ENCODE measurements at regions of chr2 and their contacts with region 1.

Region 1: GRCh38 chr2:9423100-9423921 is at the starts of genes CPSF3 and ITGB1BP1:
- DNase-seq: peak; percentile 99
- ATAC-seq: peak; percentile 89
- H3K4me3 Mint-ChIP-seq: no peak within 1 kb of the TSS
- H3K27ac Mint-ChIP-seq: peak within 1 kb of the TSS; percentile 94
- H3K4me1 Mint-ChIP-seq: peaks cover 36% of the 10 kb centered on the region
- H3K27me3 Mint-ChIP-seq: no peaks in the 10 kb centered on the region
- total RNA-seq, gene CPSF3: 72.3 to 103 TPM
- total RNA-seq, gene ITGB1BP1: 89.7 to 92.1 TPM

Region 2: GRCh38 chr2:8836971-8837794 is 586.1 kb before region 1 on chr2 and contains the start of gene KIDINS220:
- CTCF ChIA-PET with region 1: no interaction called
- POLR2A ChIA-PET with region 1: no interaction called
- intact Hi-C with region 1: loop called in 1 of 2 experiments (anchors 1 kb)
- DNase-seq: peak; percentile 92
- ATAC-seq: peak; percentile 95
- H3K4me3 Mint-ChIP-seq: peak within 1 kb of the TSS; percentile 99
- H3K27ac Mint-ChIP-seq: peak within 1 kb of the TSS; percentile 98
- H3K4me1 Mint-ChIP-seq: peaks cover 39% of the 10 kb centered on the region
- H3K27me3 Mint-ChIP-seq: no peaks in the 10 kb centered on the region
- total RNA-seq, gene KIDINS220: 22.7 to 24.4 TPM

Region 3: DNA sequence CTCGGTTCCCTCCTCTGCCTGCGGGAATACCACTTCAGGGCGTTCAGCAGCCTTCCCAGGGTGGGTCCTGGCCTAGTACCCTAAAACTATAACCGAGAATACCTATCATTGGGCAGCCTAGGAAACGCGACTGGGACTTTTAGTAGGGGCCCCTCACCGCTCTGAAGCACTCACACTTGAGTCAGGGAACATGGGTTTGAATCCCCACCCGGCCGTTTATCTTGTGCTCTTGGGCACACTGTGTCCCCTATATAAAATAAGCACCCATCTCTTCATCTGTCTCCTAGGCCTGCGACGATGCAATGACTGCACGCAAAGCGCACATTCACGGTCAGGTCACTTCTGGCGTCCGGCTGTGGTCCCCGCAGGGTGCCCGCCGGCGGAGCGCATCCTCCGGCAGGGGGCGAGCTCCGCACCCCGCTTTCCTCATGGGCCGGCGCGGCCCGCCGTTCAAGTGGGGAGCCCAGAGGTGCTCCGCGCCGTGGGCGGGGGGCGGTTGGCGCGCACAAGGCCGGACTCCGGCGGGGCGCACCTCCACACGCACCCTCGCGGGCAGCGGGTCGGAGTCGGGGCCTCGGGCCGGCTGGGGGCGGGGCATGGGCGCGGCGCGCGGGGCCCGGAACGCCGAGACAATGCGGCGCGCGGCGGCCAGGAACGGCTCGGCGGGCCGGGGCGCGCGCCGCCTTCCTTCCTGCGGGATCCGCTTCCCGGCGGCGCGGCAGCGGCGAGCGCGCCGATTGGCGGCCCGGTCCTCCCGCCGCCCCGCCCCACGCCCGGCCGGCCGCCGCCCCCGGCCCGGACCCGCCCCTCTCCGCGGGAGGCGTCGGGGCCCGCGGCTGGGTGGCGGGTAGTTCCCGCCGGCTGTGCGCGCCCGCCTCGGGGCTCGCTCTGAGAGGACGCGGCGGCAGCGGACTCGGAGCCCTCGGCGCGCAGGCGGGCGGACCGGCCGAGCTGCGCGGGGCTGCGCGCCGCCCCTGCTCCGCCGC is 217.1 kb before region 1 on chr2 and contains the start of gene ASAP2:
- CTCF ChIA-PET with region 1: no interaction called
- POLR2A ChIA-PET with region 1: no interaction called
- intact Hi-C with region 1: loop called in 1 of 2 experiments (anchors 2 kb)
- DNase-seq: peak; percentile 70
- ATAC-seq: peak; percentile 74
- H3K4me3 Mint-ChIP-seq: peak within 1 kb of the TSS; percentile 62
- H3K27ac Mint-ChIP-seq: no peak within 1 kb of the TSS
- H3K4me1 Mint-ChIP-seq: peaks cover 11% of the 10 kb centered on the region
- H3K27me3 Mint-ChIP-seq: peaks cover 43% of the 10 kb centered on the region
- total RNA-seq, gene ASAP2: 0.21 to 0.26 TPM

Region 4: GRCh38 chr2:9484533-9484932 is 61.2 kb after region 1 on chr2:
- CTCF ChIA-PET with region 1: no interaction called
- POLR2A ChIA-PET with region 1: no interaction called
- intact Hi-C with region 1: no loop called
- DNase-seq: no peak
- ATAC-seq: no peak
- H3K4me3 Mint-ChIP-seq: no peak overlapping the region
- H3K27ac Mint-ChIP-seq: no peak overlapping the region
- H3K4me1 Mint-ChIP-seq: peaks cover 18% of the 10 kb centered on the region
- H3K27me3 Mint-ChIP-seq: no peaks in the 10 kb centered on the region

Region 5: DNA sequence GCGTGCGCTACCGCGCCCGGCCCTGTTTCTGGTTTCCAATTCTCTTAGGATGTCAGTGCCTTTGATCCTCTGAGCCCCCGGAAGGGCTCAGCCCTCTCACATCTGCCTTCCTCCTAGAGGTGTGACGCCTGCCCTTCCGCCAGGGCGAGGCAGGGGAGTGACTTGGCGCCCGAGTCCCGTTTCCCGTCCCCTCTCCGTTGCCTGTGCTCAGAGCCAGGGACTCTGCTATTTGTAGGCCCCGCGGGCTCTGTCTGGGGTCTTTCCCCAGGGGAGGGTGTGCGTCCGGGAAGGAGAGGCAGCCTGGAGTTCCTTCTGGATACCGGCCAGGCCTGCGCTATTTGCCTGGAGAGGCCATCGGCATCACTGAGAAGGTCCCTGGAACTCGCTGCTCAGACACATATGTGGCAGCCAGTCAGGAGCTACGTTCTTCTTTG is 316.2 kb after region 1 on chr2:
- CTCF ChIA-PET with region 1: no interaction called
- POLR2A ChIA-PET with region 1: no interaction called
- intact Hi-C with region 1: loop called in 1 of 2 experiments (anchors 2 kb)
- DNase-seq: peak; percentile 73
- ATAC-seq: peak; percentile 75
- H3K4me3 Mint-ChIP-seq: peak overlapping the region; percentile 65
- H3K27ac Mint-ChIP-seq: peak overlapping the region; percentile 92
- H3K4me1 Mint-ChIP-seq: peaks cover 53% of the 10 kb centered on the region
- H3K27me3 Mint-ChIP-seq: no peaks in the 10 kb centered on the region

Region 6: GRCh38 chr2:9843229-9844035 is 420.1 kb after region 1 on chr2 and contains the start of gene TAF1B:
- CTCF ChIA-PET with region 1: no interaction called
- POLR2A ChIA-PET with region 1: no interaction called
- intact Hi-C with region 1: loop called (anchors 1 kb)
- DNase-seq: peak; percentile 93
- ATAC-seq: peak; percentile 80
- H3K4me3 Mint-ChIP-seq: peak within 1 kb of the TSS; percentile 89
- H3K27ac Mint-ChIP-seq: peak within 1 kb of the TSS; percentile 85
- H3K4me1 Mint-ChIP-seq: peaks cover 37% of the 10 kb centered on the region
- H3K27me3 Mint-ChIP-seq: no peaks in the 10 kb centered on the region
- total RNA-seq, gene TAF1B: 28.7 to 28.8 TPM

Region 7: DNA sequence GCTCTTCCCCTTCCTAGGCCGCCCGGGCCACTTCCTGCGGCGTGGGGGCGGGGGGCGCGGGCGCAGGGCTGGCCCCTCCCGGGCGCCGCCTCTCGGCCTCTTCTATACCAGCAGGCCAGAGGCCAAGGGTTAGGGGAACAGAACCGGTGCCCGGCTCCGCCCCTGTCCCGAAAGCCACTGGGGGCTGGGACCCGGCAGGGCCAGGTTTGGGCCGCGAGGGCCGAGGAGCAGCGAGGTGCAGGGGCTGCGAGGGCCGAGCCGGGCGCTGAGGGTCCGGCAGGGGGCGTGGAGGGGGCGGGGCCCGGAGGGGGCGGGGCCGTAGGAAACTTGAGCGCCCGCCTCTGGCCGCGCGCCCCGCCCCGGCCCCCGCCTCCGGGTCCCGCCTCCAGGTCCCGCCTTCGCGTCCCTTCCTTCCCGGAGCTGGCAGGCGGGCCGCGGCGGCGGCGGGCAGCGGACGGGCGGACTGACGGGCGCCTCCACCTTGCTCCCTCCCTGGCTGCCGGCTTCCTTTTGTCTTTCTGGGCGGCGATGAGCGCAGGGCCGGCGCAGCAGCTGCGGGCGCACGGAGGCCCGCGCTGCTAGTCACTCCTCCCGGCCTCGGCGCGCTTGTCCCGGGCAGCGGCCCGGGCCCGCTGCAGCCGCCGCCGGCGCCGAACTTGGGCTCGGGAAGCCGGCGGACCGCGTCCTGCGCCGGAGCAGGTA is 879.3 kb after region 1 on chr2 and contains the start of gene HPCAL1:
- CTCF ChIA-PET with region 1: no interaction called
- POLR2A ChIA-PET with region 1: no interaction called
- intact Hi-C with region 1: loop called in 1 of 2 experiments (anchors 1 kb)
- DNase-seq: peak; percentile 91
- ATAC-seq: peak; percentile 72
- H3K4me3 Mint-ChIP-seq: peak within 1 kb of the TSS; percentile 100
- H3K27ac Mint-ChIP-seq: peak within 1 kb of the TSS; percentile 89
- H3K4me1 Mint-ChIP-seq: peaks cover 65% of the 10 kb centered on the region
- H3K27me3 Mint-ChIP-seq: no peaks in the 10 kb centered on the region
- total RNA-seq, gene HPCAL1: 109 to 114 TPM

Measured in activated CD4-positive, alpha-beta T cell treated with anti-CD3 and anti-CD28 coated beads for 36 hours (primary cell).